ENCODE measurements at regions of chr6 and their contacts with region 1.

Region 1: DNA sequence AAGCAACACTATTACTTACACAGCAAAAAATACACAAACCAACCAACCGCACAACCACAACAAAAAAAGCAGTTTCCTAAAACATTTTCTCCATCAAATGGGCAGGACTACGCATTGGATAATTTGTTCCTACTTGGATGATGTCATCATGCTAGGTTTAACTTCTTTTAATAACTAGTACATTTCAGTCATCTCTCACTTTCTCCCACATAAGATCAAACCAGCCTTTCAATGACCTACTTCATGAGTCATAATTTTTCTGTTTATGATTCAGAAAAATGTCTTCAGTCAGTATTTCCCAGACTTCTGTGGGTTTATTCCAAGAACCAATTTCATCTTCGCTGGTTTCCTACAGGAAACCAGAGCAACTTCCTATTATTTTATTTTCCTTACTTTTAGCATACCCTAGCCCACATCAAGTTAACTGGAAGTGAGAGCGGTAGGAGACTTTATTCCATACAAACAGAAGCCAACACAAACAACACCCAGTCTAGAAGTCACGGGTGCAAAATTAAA is 134.2 kb downstream of the GMDS start:
- DNase-seq: peak; percentile 14
- H3K4me3 Mint-ChIP-seq: peak overlapping the region; percentile 45
- H3K27ac Mint-ChIP-seq: peak overlapping the region; percentile 88
- H3K4me1 Mint-ChIP-seq: peaks cover 36% of the 10 kb centered on the region
- H3K27me3 Mint-ChIP-seq: no peaks in the 10 kb centered on the region

Region 2: GRCh38 chr6:235763-236360 is 1875.4 kb before region 1 on chr6:
- CTCF ChIA-PET with region 1: no interaction called
- intact Hi-C with region 1: loop called (anchors 5 kb)
- DNase-seq: peak; percentile 88
- H3K4me3 Mint-ChIP-seq: peak overlapping the region; percentile 52
- H3K27ac Mint-ChIP-seq: peak overlapping the region; percentile 86
- H3K4me1 Mint-ChIP-seq: peaks cover 41% of the 10 kb centered on the region
- H3K27me3 Mint-ChIP-seq: no peaks in the 10 kb centered on the region

Region 3: GRCh38 chr6:1770968-1771723 is 340.1 kb before region 1 on chr6:
- CTCF ChIA-PET with region 1: no interaction called
- intact Hi-C with region 1: loop called (anchors 1 kb)
- DNase-seq: peak; percentile 78
- H3K4me3 Mint-ChIP-seq: no peak overlapping the region
- H3K27ac Mint-ChIP-seq: no peak overlapping the region
- H3K4me1 Mint-ChIP-seq: peaks cover 47% of the 10 kb centered on the region
- H3K27me3 Mint-ChIP-seq: no peaks in the 10 kb centered on the region

Region 4: GRCh38 chr6:2078888-2079287 is 32.3 kb before region 1 on chr6:
- CTCF ChIA-PET with region 1: no interaction called
- intact Hi-C with region 1: loop called (anchors 1 kb)
- DNase-seq: no peak
- H3K4me3 Mint-ChIP-seq: no peak overlapping the region
- H3K27ac Mint-ChIP-seq: no peak overlapping the region
- H3K4me1 Mint-ChIP-seq: peaks cover 32% of the 10 kb centered on the region
- H3K27me3 Mint-ChIP-seq: no peaks in the 10 kb centered on the region

Region 5: GRCh38 chr6:2158596-2159271 is 47.5 kb after region 1 on chr6:
- CTCF ChIA-PET with region 1: no interaction called
- intact Hi-C with region 1: loop called (anchors 2 kb)
- DNase-seq: peak; percentile 13
- H3K4me3 Mint-ChIP-seq: no peak overlapping the region
- H3K27ac Mint-ChIP-seq: no peak overlapping the region
- H3K4me1 Mint-ChIP-seq: peaks cover 42% of the 10 kb centered on the region
- H3K27me3 Mint-ChIP-seq: peaks cover 2% of the 10 kb centered on the region

Region 6: DNA sequence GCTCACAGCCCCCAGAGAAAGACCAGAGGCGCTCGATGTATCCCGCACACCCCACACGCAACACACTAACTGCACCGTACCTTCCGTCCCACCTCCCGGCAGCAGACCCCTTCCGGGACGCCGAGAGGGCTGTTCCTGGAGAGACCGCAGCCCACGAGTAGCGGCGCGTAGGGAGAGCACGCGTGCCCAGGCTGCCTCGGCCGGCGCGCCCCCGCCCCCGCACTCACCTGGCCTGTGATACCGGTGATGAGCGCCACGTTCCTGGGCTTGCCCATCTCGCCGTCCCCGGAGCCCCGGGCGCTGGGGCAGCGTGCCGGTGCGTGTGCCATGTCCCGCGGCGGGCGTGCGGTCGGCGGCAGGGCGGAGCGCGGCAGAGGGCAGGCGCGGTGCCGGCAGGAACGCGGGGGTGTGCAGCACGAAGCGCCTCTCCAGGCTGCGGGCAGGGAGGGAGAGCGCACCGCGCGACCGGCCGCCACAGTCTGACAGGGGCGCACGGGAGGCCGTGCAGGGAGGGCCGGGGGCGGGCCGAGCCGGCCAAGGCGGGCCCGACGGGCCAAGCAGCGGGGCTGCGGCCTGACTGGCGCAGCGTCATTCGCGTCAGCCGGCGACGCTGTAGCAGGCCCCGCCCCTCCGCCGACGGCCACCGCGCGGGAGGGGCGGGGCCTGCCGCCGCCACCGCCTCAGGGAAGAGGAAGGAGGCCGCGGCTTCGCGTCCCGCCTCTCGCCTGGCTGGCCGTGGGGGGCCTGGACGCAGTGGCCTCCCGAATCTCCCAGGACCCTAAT is 134.1 kb after region 1 on chr6 and contains the start of gene GMDS:
- CTCF ChIA-PET with region 1: no interaction called
- intact Hi-C with region 1: loop called (anchors 2 kb)
- DNase-seq: peak; percentile 79
- H3K4me3 Mint-ChIP-seq: peak within 1 kb of the TSS; percentile 88
- H3K27ac Mint-ChIP-seq: peak within 1 kb of the TSS; percentile 94
- H3K4me1 Mint-ChIP-seq: peaks cover 62% of the 10 kb centered on the region
- H3K27me3 Mint-ChIP-seq: no peaks in the 10 kb centered on the region
- total RNA-seq, gene GMDS: 38.4 to 41.3 TPM

Region 7: DNA sequence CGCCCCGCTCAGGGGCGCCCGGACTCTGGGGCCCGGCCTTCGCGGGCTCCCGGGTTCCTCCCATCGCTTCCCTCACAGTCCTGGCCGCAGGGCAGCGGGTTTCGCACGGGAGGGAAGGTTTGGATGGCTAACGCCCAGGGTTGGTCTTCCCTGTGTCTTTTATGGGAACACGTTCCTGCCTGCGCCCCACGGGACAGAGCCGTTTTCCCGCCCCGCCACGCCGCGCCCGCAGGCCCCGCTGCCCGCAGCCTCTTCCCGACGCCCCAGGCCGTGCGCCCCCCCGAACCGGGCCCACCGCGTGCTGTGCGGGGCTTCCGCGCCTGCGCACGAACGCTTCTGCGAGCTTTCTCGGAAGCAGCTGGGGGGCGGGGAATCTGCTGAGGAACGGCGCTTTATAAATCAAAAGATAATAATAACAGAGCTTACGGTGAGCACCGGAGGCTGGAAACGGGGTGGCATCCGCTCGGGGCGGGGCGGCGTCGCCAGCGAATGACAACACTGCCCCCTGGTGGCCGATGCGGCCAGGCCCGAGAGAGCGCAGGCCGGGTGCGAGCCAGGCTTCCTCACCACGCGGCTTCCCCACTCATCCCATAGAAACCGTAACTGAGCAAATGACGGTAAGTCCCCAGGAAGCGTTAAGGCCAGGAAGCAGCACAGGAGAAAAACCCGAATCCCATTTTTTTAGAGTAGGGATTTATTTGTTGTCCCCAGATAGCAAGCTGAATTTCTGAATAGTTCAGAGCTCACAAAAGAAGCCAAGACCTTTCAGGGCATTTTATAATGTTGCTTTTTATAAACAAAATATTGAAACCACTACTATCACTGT is 523.1 kb after region 1 on chr6:
- CTCF ChIA-PET with region 1: interaction called, 3 read pairs
- intact Hi-C with region 1: loop called (anchors 2 kb)
- DNase-seq: peak; percentile 88
- H3K4me3 Mint-ChIP-seq: peak overlapping the region; percentile 58
- H3K27ac Mint-ChIP-seq: no peak overlapping the region
- H3K4me1 Mint-ChIP-seq: peaks cover 3% of the 10 kb centered on the region
- H3K27me3 Mint-ChIP-seq: peaks cover 11% of the 10 kb centered on the region